A673 (cell line): ENCODE measurements at regions of chrX and their contacts with region 1.

Region 1: GRCh38 chrX:3227533-3227932 is 118.9 kb downstream of the MXRA5 start:
- DNase-seq: no peak
- H3K4me3 ChIP-seq: no peak overlapping the region
- H3K27ac ChIP-seq: no peak overlapping the region
- H3K4me1 ChIP-seq: no peaks in the 10 kb centered on the region
- H3K27me3 ChIP-seq: peaks cover 13% of the 10 kb centered on the region
- CTCF ChIP-seq: no peak

Region 2: GRCh38 chrX:3161681-3162080 is 65.9 kb before region 1 on chrX:
- CTCF ChIA-PET with region 1: no interaction called
- POLR2A ChIA-PET with region 1: no interaction called
- intact Hi-C with region 1: loop called (anchors 10 kb)
- DNase-seq: no peak
- H3K4me3 ChIP-seq: no peak overlapping the region
- H3K27ac ChIP-seq: no peak overlapping the region
- H3K4me1 ChIP-seq: no peaks in the 10 kb centered on the region
- H3K27me3 ChIP-seq: peaks cover 19% of the 10 kb centered on the region
- CTCF ChIP-seq: no peak